PC-3 (cell line): ENCODE measurements at regions of chr1 and their contacts with region 1.

Region 1: DNA sequence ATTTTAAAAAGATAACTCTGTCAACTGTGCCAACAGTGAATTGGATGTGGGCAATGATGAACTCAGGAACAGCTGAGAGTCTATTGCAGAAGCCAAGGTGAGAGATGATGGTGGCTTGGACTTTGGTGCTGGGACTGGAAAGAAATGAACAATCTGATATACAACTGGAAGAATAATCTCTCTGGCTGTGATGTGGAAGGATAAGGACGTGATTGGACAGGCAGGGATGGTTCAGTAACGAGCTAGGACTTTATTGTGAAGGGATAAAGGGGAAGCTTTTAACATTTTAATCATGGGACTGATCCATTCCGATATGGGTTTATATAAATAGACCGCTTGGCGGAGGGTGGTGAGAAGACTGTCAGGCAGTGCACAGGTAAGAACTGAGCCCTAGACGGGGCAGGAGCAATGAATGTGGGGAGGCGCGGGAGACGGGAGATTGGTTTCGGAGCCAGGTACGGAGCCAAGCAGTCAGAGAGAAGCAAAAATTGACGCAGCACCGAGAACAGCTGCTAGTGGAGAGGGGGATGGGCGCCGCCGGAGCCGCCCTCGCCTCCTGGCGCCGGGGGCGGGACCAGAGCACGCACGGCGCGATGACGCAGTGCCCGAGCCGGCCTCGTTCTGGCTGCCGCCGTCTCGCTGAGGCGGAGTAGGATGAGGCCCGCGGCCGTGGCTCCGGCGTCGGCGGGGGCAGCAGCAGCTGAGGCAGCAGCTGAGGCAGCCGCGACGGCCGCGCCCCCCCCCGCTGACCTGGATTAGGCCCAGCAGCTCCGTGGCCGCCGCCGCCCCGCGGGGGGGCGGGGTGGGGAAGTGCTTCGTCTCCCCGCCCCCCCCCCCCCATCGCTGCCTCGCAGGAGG is at the start of gene RNF11:
- DNase-seq: peak; percentile 89
- ATAC-seq: peak; percentile 88
- H3K4me3 ChIP-seq: peak within 1 kb of the TSS; percentile 96
- H3K27ac ChIP-seq: peak within 1 kb of the TSS; percentile 25
- H3K4me1 ChIP-seq: peaks cover 23% of the 10 kb centered on the region
- H3K27me3 ChIP-seq: no peaks in the 10 kb centered on the region
- CTCF ChIP-seq: no peak
- total RNA-seq, gene RNF11: 117 and 169 TPM in 2 replicates

Region 2: DNA sequence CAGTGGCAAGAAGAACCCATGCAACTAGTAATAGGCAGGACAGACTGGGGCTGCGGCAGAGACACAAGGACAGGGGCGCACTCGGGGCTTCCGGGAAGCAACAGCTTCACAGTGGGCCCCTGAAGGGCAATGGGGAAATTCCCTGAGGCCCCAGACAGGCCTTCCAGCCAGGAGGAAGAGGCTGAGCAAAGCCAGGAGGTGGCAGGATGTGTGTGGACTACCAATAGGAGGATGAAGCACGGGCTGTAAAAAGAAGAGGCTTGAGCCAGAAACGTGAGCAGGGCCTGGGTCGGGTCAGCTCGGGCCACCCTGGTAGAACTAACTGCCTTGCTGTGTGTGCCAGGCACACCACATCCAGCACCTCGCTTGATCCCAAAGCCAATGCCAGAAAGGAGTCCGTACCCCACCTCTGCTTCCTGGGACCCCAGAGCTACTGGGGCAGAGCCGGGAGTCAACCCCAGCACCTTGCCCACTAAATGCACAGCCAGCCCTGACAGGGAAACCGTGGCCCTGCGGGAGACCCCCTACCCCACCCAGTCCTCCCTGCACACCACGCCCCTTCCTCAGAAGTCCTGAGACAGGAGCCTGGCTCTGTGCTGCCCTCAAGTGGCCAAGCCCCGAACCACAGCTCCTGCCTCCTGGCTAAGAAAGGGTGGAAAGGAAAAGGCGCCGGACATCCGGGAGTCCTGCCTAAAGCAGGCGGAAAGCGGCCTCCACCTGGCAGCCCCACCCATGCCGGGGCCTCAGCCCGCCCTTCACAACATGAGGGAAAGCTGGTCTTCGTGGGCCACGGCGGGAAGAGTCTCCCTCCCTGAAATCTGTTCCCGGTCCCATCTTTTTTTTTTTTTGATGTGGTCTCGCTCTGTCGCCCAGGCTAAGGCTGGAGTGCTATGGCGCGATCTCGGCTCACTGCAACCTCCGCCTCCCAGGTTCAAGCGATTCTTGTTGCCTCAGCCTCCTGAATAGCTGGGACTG is 60.8 kb after region 1 on chr1:
- CTCF ChIA-PET with region 1: interaction called, 4 read pairs
- POLR2A ChIA-PET with region 1: no interaction called
- intact Hi-C with region 1: loop called (anchors 5 kb)
- DNase-seq: peak; percentile 93
- ATAC-seq: peak; percentile 87
- H3K4me3 ChIP-seq: no peak overlapping the region
- H3K27ac ChIP-seq: no peak overlapping the region
- H3K4me1 ChIP-seq: 0 out of 2 replicates have a peak, but pooled peaks cover 4% of the 10 kb centered on the region
- H3K27me3 ChIP-seq: no peaks in the 10 kb centered on the region
- CTCF ChIP-seq: peak; percentile 89